SK-N-SH (cell line): ENCODE measurements at regions of chr6 and their contacts with region 1.

Region 1: DNA sequence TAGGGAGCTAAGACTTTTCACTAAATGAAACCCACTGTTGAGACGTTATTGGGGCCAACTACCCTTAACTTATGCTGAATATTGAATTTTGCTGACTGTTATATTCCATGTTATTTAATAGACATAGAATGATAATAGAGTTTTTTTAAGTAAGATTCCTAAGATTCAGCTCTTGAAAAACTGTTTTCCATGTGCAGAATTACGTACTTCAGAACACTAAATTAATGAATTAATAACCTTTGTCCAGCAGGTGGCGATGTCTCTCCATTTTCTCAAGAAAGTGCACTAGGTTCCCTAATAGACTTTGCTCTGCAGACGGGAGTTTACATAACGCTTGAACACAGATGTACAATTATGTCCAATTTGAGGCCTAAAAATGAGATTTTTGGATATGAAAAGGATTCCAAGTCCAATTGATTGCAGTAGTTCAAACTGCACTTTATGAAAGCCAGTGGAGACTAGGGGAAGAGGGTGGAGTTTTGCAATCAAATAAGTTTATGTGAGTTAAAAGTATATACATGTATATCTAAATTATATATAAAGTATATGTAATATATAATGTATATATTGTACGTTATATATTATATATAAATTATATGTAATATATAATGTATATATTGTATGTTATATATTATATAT is 282.1 kb downstream of the UST start:
- DNase-seq: peak; percentile 67
- H3K4me3 ChIP-seq: no peak overlapping the region; a peak in 1 of 4 replicates
- H3K27ac ChIP-seq: no peak overlapping the region
- H3K4me1 ChIP-seq: peaks cover 11 to 13% of the 10 kb centered on the region in 2 experiments
- H3K27me3 ChIP-seq: no peaks in the 10 kb centered on the region
- CTCF ChIP-seq: peak; percentile 70
- EP300 ChIP-seq: no peak
- RAD21 ChIP-seq: peak; percentile 96

Region 2: GRCh38 chr6:149014631-149015534 is 14.0 kb before region 1 on chr6:
- CTCF ChIA-PET with region 1: interaction called, 10 read pairs
- POLR2A ChIA-PET with region 1: no interaction called
- DNase-seq: no peak
- H3K4me3 ChIP-seq: no peak overlapping the region
- H3K27ac ChIP-seq: peak overlapping the region in 1 of 2 experiments; percentile 99; a peak in 2 of 4 replicates
- H3K4me1 ChIP-seq: peaks cover 0 to 31% of the 10 kb centered on the region in 2 experiments; a peak in 3 of 4 replicates
- H3K27me3 ChIP-seq: no peaks in the 10 kb centered on the region
- CTCF ChIP-seq: no peak
- EP300 ChIP-seq: no peak; a peak in 1 of 4 replicates
- RAD21 ChIP-seq: no peak

Region 3: GRCh38 chr6:149513915-149514314 is 485.0 kb after region 1 on chr6:
- CTCF ChIA-PET with region 1: interaction called, 42 read pairs
- POLR2A ChIA-PET with region 1: no interaction called
- DNase-seq: no peak
- H3K4me3 ChIP-seq: no peak overlapping the region
- H3K27ac ChIP-seq: no peak overlapping the region
- H3K4me1 ChIP-seq: peaks cover 0 to 3% of the 10 kb centered on the region in 2 experiments; a peak in 1 of 4 replicates
- H3K27me3 ChIP-seq: no peaks in the 10 kb centered on the region
- CTCF ChIP-seq: no peak
- EP300 ChIP-seq: no peak
- RAD21 ChIP-seq: no peak